ENCODE measurements at regions of chr13 and their contacts with region 1.

Region 1: DNA sequence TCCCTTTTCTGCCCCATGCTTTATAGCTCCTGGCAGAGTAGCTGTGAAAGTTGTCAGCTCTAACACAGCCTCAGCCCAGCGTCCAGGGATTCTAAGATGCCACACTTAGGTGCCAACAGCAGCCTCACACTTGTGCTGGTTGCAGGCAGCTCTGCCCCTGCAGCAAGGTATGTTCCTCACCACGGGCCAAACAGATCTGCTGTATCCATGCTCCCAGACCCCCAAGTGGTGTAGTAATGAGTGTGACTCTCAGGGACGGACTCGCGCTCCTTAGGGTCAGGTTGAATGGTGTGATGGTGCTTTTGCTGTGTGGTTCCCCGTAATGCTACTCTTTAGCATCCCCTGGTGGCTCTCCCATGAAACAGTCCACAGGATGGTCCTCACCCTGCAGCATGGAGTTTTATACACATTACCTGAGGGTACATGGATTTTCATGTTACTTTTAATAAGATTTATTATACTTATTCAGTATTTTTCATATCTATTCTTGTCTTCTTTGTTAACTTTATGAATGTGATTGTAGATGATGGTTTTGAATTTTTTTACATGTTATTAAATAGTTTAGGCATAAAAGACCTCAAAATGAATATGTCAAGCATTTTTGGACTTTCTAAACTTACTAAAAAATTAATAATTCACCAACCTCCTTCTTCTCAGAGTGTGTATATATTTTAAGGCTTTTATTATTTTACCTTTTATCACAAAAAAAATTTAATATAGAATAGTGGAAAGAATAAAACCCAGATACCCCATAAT is 232.5 kb downstream of the SLC7A1 start:
- DNase-seq: peak; percentile 31
- ATAC-seq: peak; percentile 87 to 94

Region 2: GRCh38 chr13:29270271-29270985 is 92.6 kb before region 1 on chr13:
- intact Hi-C with region 1: loop called in 1 of 2 experiments (anchors 10 kb)
- DNase-seq: no peak
- ATAC-seq: no peak

Region 3: GRCh38 chr13:29654843-29655547 is 292.0 kb after region 1 on chr13:
- intact Hi-C with region 1: no loop called
- DNase-seq: no peak
- ATAC-seq: peak in 1 of 2 donors; percentile 29